CD8-positive, alpha-beta memory T cell (primary cell): ENCODE measurements at regions of chr6 and their contacts with region 1.

Region 1: GRCh38 chr6:13574149-13574570 is 241 bp upstream of the SIRT5 start:
- DNase-seq: peak; percentile 89 to 97 (median 96)
- H3K4me3 ChIP-seq: peak overlapping the region; percentile 95
- H3K4me3 Mint-ChIP-seq: peak overlapping the region; percentile 90 to 97 (median 94)
- H3K27ac ChIP-seq: peak overlapping the region; percentile 83
- H3K27ac Mint-ChIP-seq: peak overlapping the region; percentile 92 to 99 (median 96)
- H3K4me1 ChIP-seq: peaks cover 10% of the 10 kb centered on the region
- H3K4me1 Mint-ChIP-seq: peaks cover 21 to 31% (median 29%) of the 10 kb centered on the region in 3 donors
- H3K27me3 ChIP-seq: no peaks in the 10 kb centered on the region
- H3K27me3 Mint-ChIP-seq: no peaks in the 10 kb centered on the region

Region 2: GRCh38 chr6:13334953-13335352 is 239.2 kb before region 1 on chr6:
- CTCF ChIA-PET with region 1: interaction called, 10 read pairs
- POLR2A ChIA-PET with region 1: interaction called, 3 read pairs
- DNase-seq: no peak
- H3K4me3 ChIP-seq: no peak overlapping the region
- H3K4me3 Mint-ChIP-seq: no peak overlapping the region
- H3K27ac ChIP-seq: no peak overlapping the region
- H3K27ac Mint-ChIP-seq: peak overlapping the region in 1 of 8 donors; percentile 8
- H3K4me1 ChIP-seq: peaks cover 4% of the 10 kb centered on the region
- H3K4me1 Mint-ChIP-seq: peaks cover 1 to 9% (median 6%) of the 10 kb centered on the region in 3 donors
- H3K27me3 ChIP-seq: no peaks in the 10 kb centered on the region
- H3K27me3 Mint-ChIP-seq: no peaks in the 10 kb centered on the region

Region 3: DNA sequence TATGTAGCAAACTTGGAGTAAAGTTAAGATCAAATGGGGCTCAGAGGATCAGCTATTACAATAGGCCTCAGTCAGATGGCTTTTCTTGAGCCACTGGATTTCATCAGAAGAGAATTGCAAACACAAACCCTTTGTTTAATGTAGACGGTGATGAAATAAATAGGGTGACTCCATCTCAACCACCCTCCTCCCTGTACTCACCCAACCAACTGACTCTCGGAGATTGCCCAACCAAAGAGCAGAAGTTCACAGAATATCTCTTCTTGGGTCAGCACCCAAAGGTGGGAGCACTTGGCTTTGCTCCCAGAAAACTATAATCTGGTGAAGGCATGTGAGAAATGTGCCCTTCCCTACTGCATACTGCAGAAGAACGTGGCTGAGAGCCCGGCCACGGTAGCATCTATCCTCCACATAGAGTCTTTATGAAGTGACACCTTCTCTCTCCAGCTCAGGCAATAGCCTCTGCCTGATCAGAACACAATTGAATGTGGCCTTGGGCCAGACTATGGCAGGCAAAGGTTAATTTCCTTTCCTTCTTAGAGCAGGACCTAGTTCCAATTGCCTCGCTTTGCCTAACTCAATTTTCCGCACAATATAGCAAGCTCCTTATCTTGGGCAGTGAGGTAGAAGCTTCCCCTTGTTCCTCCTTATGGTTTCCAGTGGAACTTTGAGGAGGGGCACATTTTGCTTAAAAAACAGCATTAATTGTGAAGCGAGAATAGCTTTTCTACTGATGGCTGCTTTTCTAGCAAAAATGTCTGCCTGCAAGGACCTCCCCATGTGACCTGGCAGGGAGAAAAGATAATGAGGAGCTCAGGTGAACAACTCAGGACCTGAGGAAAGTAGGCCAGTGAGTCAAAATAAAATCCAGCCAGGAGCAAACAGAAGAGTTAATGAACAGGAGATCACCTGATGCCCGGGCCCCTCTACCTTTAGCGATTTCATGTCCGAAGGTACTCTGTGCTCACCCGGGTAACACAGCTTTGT is 166.2 kb before region 1 on chr6:
- CTCF ChIA-PET with region 1: no interaction called
- POLR2A ChIA-PET with region 1: no interaction called
- DNase-seq: no peak
- H3K4me3 ChIP-seq: no peak overlapping the region
- H3K4me3 Mint-ChIP-seq: no peak overlapping the region
- H3K27ac ChIP-seq: no peak overlapping the region
- H3K27ac Mint-ChIP-seq: no peak overlapping the region
- H3K4me1 ChIP-seq: no peaks in the 10 kb centered on the region
- H3K4me1 Mint-ChIP-seq: peaks cover 0 to 5% (median 0%) of the 10 kb centered on the region in 3 donors
- H3K27me3 ChIP-seq: no peaks in the 10 kb centered on the region
- H3K27me3 Mint-ChIP-seq: no peaks in the 10 kb centered on the region

Region 4: GRCh38 chr6:13559251-13559650 is 14.9 kb before region 1 on chr6:
- CTCF ChIA-PET with region 1: interaction called, 38 read pairs
- POLR2A ChIA-PET with region 1: interaction called, 3 read pairs
- DNase-seq: no peak
- H3K4me3 ChIP-seq: no peak overlapping the region
- H3K4me3 Mint-ChIP-seq: no peak overlapping the region
- H3K27ac ChIP-seq: no peak overlapping the region
- H3K27ac Mint-ChIP-seq: no peak overlapping the region
- H3K4me1 ChIP-seq: no peaks in the 10 kb centered on the region
- H3K4me1 Mint-ChIP-seq: no peaks in the 10 kb centered on the region
- H3K27me3 ChIP-seq: no peaks in the 10 kb centered on the region
- H3K27me3 Mint-ChIP-seq: peaks cover 1 to 16% of the 10 kb centered on the region in 2 donors

Region 5: DNA sequence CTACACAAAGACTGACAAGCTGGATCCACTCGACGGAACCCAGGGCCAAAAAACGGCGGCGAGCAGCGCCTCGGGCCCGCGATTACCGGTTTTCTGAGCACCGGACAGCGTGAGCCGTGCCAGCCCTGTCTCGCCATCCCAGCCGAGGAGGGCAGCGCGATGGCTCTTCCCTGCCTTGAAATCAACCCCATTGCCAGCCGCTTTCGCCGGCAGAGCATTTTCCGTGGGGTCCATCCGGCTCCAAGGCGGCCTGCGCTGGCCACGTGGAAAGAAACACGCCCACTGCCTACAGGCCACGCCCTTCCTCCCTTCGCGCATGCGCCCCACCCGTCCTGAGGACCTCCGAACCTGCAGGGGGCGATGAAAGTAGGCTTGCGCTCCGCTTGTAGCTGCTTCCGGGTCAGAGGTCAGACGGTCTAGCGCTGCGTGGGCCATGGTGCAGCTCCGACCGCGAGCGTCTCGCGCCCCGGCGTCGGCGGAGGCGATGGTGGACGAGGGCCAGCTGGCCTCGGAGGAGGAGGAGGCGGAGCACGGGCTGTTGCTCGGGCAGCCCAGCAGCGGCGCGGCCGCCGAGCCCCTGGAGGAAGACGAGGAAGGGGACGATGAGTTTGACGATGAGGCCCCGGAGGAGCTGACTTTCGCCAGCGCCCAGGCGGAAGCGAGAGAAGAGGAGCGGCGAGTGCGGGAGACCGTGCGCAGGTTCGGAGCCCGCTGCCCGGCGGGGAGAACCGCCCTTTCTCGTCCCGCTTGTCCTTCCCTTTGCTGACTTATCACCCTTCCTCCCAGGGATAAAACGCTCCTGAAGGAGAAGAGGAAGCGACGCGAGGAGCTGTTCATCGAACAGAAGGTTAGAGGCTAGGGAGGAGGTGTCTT is 41.0 kb after region 1 on chr6 and contains the start of gene NOL7:
- CTCF ChIA-PET with region 1: interaction called, 94 read pairs
- POLR2A ChIA-PET with region 1: interaction called, 38 read pairs
- DNase-seq: peak; percentile 98 to 99 (median 98)
- H3K4me3 ChIP-seq: peak within 1 kb of the TSS; percentile 92
- H3K4me3 Mint-ChIP-seq: peak within 1 kb of the TSS; percentile 89 to 99 (median 97)
- H3K27ac ChIP-seq: peak within 1 kb of the TSS; percentile 95
- H3K27ac Mint-ChIP-seq: peak within 1 kb of the TSS; percentile 87 to 99 (median 96)
- H3K4me1 ChIP-seq: peaks cover 24% of the 10 kb centered on the region
- H3K4me1 Mint-ChIP-seq: peaks cover 33 to 51% (median 43%) of the 10 kb centered on the region in 3 donors
- H3K27me3 ChIP-seq: no peaks in the 10 kb centered on the region
- H3K27me3 Mint-ChIP-seq: peaks cover 0 to 4% of the 10 kb centered on the region in 2 donors
- total RNA-seq, gene NOL7: 120 to 122 TPM

Region 6: GRCh38 chr6:13762611-13763441 is 188.7 kb after region 1 on chr6:
- CTCF ChIA-PET with region 1: interaction called, 15 read pairs
- POLR2A ChIA-PET with region 1: no interaction called
- DNase-seq: peak in 2 of 5 donors; percentile 14 to 24
- H3K4me3 ChIP-seq: no peak overlapping the region
- H3K4me3 Mint-ChIP-seq: peak overlapping the region; percentile 2 to 72 (median 65)
- H3K27ac ChIP-seq: no peak overlapping the region
- H3K27ac Mint-ChIP-seq: peak overlapping the region in 7 of 8 donors; percentile 4 to 86 (median 40)
- H3K4me1 ChIP-seq: peaks cover 28% of the 10 kb centered on the region
- H3K4me1 Mint-ChIP-seq: peaks cover 32 to 47% (median 45%) of the 10 kb centered on the region in 3 donors
- H3K27me3 ChIP-seq: no peaks in the 10 kb centered on the region
- H3K27me3 Mint-ChIP-seq: peaks cover 0 to 4% of the 10 kb centered on the region in 2 donors